HEK293 (cell line): ENCODE measurements at regions of chr11 and their contacts with region 1.

Region 1: GRCh38 chr11:13210424-13210823 is 67.2 kb upstream of the BMAL1 start:
- H3K4me3 ChIP-seq: no peak overlapping the region
- H3K27ac ChIP-seq: no peak overlapping the region
- H3K4me1 ChIP-seq: no peaks in the 10 kb centered on the region
- CTCF ChIP-seq: peak; percentile 55; the same call in 1 of the 2 replicates

Region 2: DNA sequence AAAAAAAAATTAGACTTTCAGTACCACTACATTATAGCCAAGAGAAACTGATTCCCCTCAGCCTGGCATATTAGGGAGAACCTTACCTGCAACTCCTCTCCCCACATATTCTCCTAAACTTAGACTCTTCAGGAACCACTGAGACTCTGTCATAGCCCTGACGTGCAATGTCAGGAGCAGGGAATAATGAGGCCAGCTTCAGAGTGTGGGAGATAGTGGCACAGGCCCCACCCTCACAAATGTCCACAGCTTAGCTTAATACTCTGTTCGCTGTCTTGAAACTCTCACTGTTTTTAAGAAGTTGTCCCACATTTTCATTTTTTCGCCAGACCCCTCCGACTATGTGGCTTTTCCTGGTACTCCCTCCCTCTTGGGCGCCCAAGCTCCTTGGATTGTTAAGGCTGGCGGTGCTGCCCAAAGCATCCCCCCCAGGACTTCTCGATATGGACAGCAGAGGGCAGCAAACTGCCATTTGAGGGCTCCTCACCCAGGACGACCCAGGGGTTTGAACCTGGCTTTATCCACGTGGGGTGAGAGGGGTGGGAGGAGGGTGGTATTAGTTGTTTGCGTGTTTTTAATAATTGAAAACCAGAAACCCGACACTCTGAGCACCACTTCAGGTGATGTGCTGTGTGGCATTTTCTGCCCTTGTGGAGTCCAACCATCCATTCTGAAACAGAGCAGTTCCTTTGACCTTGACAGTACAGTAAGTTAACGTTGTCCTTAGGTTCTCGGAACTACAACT is 246.5 kb before region 1 on chr11:
- CTCF ChIA-PET with region 1: interaction called, 29 read pairs
- POLR2A ChIA-PET with region 1: no interaction called
- H3K4me3 ChIP-seq: no peak overlapping the region
- H3K27ac ChIP-seq: no peak overlapping the region
- H3K4me1 ChIP-seq: no peaks in the 10 kb centered on the region
- CTCF ChIP-seq: 0 out of 2 replicates have a peak, but pooled peaks have one; percentile 35

Region 3: DNA sequence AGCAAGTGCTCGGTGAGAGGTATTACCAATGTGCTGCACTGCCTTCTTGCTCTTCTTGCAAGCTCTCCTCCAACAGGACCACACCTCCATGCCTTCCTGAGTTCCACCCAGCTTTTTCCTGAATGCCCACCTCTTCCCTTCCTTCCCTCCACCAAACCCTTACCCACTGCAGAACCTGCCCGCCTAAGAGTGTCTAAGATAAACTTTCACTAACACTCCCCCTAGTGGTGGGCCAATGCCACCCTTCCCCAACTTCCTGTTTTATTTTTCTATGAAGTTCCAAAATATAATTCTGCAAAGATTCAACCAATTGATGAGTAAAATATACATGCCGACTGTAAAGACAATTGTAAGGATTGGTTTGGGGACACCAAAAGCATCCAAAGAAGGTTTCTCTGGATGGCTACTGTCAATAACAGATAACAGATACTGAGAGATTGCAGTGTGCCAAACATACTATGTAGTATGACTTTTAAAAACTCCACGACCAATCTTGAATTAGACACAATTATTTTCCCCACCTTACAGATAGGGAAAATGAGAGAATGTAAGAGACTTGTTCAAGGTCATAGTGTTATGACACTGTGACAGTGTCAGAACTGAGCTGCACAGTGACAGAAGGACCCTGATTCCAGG is 28.6 kb after region 1 on chr11:
- CTCF ChIA-PET with region 1: interaction called, 76 read pairs
- POLR2A ChIA-PET with region 1: no interaction called
- H3K4me3 ChIP-seq: no peak overlapping the region
- H3K27ac ChIP-seq: no peak overlapping the region
- H3K4me1 ChIP-seq: no peaks in the 10 kb centered on the region
- CTCF ChIP-seq: peak; percentile 32; the same call in 1 of the 2 replicates

Region 4: GRCh38 chr11:13329670-13330356 is 119.4 kb after region 1 on chr11:
- CTCF ChIA-PET with region 1: interaction called, 114 read pairs
- POLR2A ChIA-PET with region 1: no interaction called
- H3K4me3 ChIP-seq: no peak overlapping the region
- H3K27ac ChIP-seq: no peak overlapping the region
- H3K4me1 ChIP-seq: peaks cover 3% of the 10 kb centered on the region; the same call in 1 of the 2 replicates
- CTCF ChIP-seq: no peak

Region 5: DNA sequence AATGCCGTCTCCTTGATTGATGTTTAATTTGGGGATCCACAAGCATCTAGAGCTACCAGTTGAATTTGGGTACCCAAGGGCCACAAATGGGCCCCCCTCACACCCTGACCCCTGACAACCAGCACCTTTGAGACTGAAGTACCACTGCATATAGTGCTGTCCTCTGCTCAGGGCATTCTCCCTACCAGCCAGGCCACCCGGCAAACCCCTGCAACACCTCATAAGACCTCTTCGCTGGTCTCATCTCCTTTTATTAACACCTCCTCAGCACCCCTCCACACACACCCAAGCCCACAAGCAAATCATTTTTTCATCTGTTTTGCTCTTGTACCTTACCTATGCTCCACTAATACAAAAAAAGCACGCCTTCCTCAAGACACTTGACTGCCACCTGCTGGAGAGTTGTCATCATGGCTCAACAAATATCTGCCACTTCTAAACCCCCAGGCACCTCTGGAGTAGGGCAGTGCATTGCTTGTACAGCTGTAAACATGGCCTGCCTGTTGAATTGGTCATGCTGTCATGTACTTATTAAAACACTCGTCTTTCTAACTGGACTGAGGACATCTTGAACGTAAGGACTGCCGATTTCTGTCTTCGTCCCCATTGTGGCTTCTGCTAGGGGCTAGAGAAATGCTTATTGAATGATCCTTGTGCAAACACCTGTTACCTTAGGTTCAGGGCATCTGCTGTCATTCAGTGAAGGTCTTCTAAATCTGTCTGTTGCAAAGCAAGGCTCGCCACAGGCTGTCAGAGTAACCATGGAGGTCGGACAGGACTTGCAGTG is 133.7 kb after region 1 on chr11:
- CTCF ChIA-PET with region 1: interaction called, 119 read pairs
- POLR2A ChIA-PET with region 1: no interaction called
- H3K4me3 ChIP-seq: no peak overlapping the region
- H3K27ac ChIP-seq: no peak overlapping the region
- H3K4me1 ChIP-seq: no peaks in the 10 kb centered on the region
- CTCF ChIP-seq: no peak

Region 6: GRCh38 chr11:13384908-13385640 is 174.7 kb after region 1 on chr11:
- CTCF ChIA-PET with region 1: interaction called, 26 read pairs
- POLR2A ChIA-PET with region 1: no interaction called
- H3K4me3 ChIP-seq: no peak overlapping the region
- H3K27ac ChIP-seq: no peak overlapping the region
- H3K4me1 ChIP-seq: no peaks in the 10 kb centered on the region
- CTCF ChIP-seq: no peak

Region 7: GRCh38 chr11:13535819-13536218 is 325.4 kb after region 1 on chr11:
- CTCF ChIA-PET with region 1: no interaction called
- POLR2A ChIA-PET with region 1: no interaction called
- H3K4me3 ChIP-seq: no peak overlapping the region
- H3K27ac ChIP-seq: no peak overlapping the region
- H3K4me1 ChIP-seq: no peaks in the 10 kb centered on the region
- CTCF ChIP-seq: no peak